ENCODE measurements at regions of chr4 and their contacts with region 1.

Region 1: GRCh38 chr4:75724066-75724866 is at the start of gene USO1:
- DNase-seq: peak; percentile 100
- H3K4me3 Mint-ChIP-seq: peak within 1 kb of the TSS; percentile 98
- H3K27ac Mint-ChIP-seq: peak within 1 kb of the TSS; percentile 99
- H3K4me1 Mint-ChIP-seq: peaks cover 39% of the 10 kb centered on the region
- H3K27me3 Mint-ChIP-seq: no peaks in the 10 kb centered on the region
- total RNA-seq, gene USO1: 57.4 and 59.0 TPM in 2 replicates

Region 2: DNA sequence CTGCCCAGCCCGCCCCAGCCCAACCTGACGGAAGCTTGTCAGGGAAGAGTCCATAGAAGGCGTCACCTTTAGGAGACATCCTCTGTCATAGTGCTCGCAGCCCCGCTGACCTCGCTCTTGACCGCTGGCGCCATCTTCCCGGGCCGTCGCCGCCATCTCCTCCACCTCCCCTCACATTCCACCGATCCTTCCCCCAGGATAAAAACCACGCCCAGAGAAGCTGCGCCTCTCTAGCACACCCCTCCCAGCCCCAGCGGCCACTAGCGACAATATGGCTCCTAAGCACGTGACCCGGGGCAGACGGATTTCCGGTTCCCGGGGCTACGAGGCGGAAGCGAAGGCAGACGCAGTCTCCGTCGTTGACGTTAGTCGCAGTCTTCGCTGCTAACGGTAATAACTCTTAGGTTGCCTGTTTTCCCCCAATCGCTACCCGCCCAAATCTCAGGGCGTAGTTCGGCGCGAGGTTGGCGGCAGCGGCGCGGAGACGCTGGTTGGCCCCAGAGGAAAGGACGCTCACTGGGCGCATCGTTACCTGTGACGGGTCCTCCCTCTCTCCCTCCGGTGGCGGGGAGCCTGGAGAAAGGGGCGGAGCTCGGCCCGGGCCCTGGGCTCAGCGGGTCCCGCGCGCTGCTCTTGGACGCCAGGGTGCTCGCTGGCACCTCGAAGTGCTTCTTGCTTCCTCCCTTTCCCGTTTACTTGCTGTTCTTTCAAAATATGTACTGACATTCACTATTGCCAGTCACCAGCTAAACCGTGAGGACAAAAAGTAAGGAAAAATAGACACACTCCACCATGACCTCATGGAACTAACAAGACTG is 209.9 kb before region 1 on chr4 and contains the starts of genes RCHY1 and THAP6:
- intact Hi-C with region 1: loop called (anchors 1 kb)
- DNase-seq: peak; percentile 91
- H3K4me3 Mint-ChIP-seq: no peak within 1 kb of the TSS
- H3K27ac Mint-ChIP-seq: peak within 1 kb of the TSS; percentile 98
- H3K4me1 Mint-ChIP-seq: peaks cover 35% of the 10 kb centered on the region
- H3K27me3 Mint-ChIP-seq: no peaks in the 10 kb centered on the region
- total RNA-seq, gene RCHY1: 22.9 and 25.4 TPM in 2 replicates
- total RNA-seq, gene THAP6: 17.6 and 18.4 TPM in 2 replicates

Region 3: DNA sequence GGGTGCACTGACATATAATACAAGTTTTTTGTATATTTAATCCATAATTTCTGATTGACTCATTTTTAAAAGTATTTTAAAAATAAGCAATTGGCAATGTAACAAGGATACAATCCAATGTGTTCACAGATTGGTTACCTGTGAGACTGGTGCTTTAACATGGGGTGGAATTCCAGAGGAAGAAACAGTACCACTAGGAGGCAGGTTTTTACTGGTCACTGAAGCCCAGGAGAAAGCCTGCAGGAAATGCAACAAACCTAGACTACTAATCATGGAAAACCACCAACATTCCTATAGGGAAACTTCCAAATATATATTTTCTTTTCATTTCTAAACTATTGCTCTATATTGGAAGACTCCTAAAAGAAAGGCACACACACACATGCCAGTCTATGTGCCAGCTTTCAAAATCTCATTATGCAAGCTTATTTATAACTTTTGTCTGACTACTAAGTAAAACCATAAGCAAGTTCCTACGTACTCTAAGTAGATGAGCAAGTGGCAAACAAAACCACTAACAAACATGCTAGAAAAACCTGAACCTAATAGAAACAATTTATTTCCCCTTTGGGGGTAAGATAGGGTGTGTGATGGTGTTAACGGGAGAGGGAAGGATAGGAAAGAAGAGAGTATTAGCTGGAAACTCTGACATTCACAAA is 70.3 kb before region 1 on chr4:
- intact Hi-C with region 1: loop called (anchors 1 kb)
- DNase-seq: no peak
- H3K4me3 Mint-ChIP-seq: peak overlapping the region; percentile 64
- H3K27ac Mint-ChIP-seq: peak overlapping the region; percentile 89
- H3K4me1 Mint-ChIP-seq: peaks cover 53% of the 10 kb centered on the region
- H3K27me3 Mint-ChIP-seq: no peaks in the 10 kb centered on the region

Region 4: GRCh38 chr4:75708218-75708691 is 16.0 kb before region 1 on chr4:
- intact Hi-C with region 1: loop called (anchors 2 kb)
- DNase-seq: peak; percentile 28
- H3K4me3 Mint-ChIP-seq: no peak overlapping the region
- H3K27ac Mint-ChIP-seq: no peak overlapping the region
- H3K4me1 Mint-ChIP-seq: peaks cover 5% of the 10 kb centered on the region
- H3K27me3 Mint-ChIP-seq: no peaks in the 10 kb centered on the region

Region 5: GRCh38 chr4:75940692-75941253 is 216.5 kb after region 1 on chr4 and contains the start of gene NAAA:
- intact Hi-C with region 1: loop called (anchors 1 kb)
- DNase-seq: peak; percentile 84
- H3K4me3 Mint-ChIP-seq: peak within 1 kb of the TSS; percentile 97
- H3K27ac Mint-ChIP-seq: peak within 1 kb of the TSS; percentile 94
- H3K4me1 Mint-ChIP-seq: peaks cover 8% of the 10 kb centered on the region
- H3K27me3 Mint-ChIP-seq: no peaks in the 10 kb centered on the region
- total RNA-seq, gene NAAA: 30.8 and 33.9 TPM in 2 replicates